WTC11 (cell line): ENCODE measurements at regions of chr2 and their contacts with region 1.

Region 1: GRCh38 chr2:88880441-88880953 is 189.0 kb downstream of the RPIA start:
- DNase-seq: peak; percentile 23
- ATAC-seq: peak; percentile 74
- H3K4me3 Mint-ChIP-seq: no peak overlapping the region
- H3K27ac Mint-ChIP-seq: no peak overlapping the region
- H3K4me1 Mint-ChIP-seq: peaks cover 7% of the 10 kb centered on the region
- H3K27me3 Mint-ChIP-seq: no peaks in the 10 kb centered on the region; the same call in 1 of the 2 replicates
- CTCF ChIP-seq: peak; percentile 61

Region 2: GRCh38 chr2:88729061-88729745 is 151.3 kb before region 1 on chr2:
- CTCF ChIA-PET with region 1: no interaction called
- POLR2A ChIA-PET with region 1: no interaction called
- DNase-seq: no peak
- ATAC-seq: no peak
- H3K4me3 Mint-ChIP-seq: no peak overlapping the region
- H3K27ac Mint-ChIP-seq: no peak overlapping the region
- H3K4me1 Mint-ChIP-seq: no peaks in the 10 kb centered on the region
- H3K27me3 Mint-ChIP-seq: no peaks in the 10 kb centered on the region
- CTCF ChIP-seq: no peak

Region 3: GRCh38 chr2:88831792-88832248 is 48.7 kb before region 1 on chr2:
- CTCF ChIA-PET with region 1: interaction called, 40 read pairs
- POLR2A ChIA-PET with region 1: no interaction called
- DNase-seq: peak; percentile 90
- ATAC-seq: peak; percentile 97
- H3K4me3 Mint-ChIP-seq: no peak overlapping the region
- H3K27ac Mint-ChIP-seq: no peak overlapping the region
- H3K4me1 Mint-ChIP-seq: no peaks in the 10 kb centered on the region
- H3K27me3 Mint-ChIP-seq: no peaks in the 10 kb centered on the region
- CTCF ChIP-seq: peak; percentile 84

Region 4: DNA sequence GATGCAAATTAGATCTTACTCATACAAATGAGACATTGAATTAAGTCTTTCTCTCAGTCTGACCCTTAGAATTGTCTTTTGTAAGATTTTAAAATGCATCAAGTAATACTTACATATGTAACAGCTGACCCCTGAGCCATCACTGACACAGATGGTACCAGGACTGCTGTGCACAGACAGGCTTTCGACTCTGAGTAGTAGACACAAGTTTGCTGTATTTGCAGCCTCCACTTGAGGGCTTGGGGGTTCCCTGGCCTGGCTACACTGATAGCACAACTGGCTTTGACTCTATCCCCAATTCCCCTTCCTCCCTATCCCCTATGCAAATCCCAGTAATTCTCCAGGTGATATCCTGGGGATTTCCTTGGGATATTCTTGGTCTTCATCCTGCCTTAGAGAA is 11.7 kb after region 1 on chr2:
- CTCF ChIA-PET with region 1: interaction called, 20 read pairs
- POLR2A ChIA-PET with region 1: no interaction called
- DNase-seq: no peak
- ATAC-seq: no peak
- H3K4me3 Mint-ChIP-seq: no peak overlapping the region
- H3K27ac Mint-ChIP-seq: no peak overlapping the region
- H3K4me1 Mint-ChIP-seq: no peaks in the 10 kb centered on the region
- H3K27me3 Mint-ChIP-seq: peaks cover 4% of the 10 kb centered on the region; the same call in 1 of the 2 replicates
- CTCF ChIP-seq: no peak

Region 5: GRCh38 chr2:88903749-88904353 is 23.4 kb after region 1 on chr2:
- CTCF ChIA-PET with region 1: interaction called, 25 read pairs
- POLR2A ChIA-PET with region 1: no interaction called
- DNase-seq: no peak
- ATAC-seq: peak; percentile 79
- H3K4me3 Mint-ChIP-seq: no peak overlapping the region
- H3K27ac Mint-ChIP-seq: no peak overlapping the region
- H3K4me1 Mint-ChIP-seq: no peaks in the 10 kb centered on the region
- H3K27me3 Mint-ChIP-seq: no peaks in the 10 kb centered on the region
- CTCF ChIP-seq: peak; percentile 56

Region 6: DNA sequence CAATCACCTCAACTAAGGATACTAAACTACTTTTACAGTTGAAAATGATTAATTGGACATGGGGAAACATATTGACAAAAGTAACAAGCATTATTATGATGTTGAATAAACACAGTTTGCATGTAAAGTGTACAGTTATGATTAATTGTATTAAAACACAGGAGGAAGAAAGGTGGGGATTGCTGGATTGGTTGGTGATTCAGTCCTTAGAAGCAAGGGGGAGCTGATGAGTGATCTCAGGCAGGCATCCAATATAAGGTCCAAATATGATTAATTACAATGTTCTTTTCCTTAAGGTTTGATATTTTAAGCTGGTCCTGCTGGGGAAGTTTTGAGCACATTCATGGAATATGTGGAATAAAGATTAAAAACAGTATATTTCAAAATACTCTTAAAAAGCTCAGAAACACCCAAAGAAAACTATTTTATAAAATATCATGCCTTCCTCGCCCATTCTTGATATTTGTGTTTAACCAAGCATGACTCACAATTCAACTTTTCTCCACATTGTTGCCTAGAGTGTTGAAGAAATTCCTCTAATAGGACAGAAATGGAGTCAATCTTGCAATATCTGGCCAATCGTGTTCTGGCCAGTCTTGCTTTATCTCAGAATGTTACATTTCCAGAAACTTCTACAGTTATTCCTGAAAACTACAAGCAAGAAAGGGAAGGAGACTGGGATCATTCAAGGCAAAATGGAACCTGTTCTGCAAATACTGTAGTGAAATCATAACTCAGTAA is 79.2 kb after region 1 on chr2:
- CTCF ChIA-PET with region 1: interaction called, 16 read pairs
- POLR2A ChIA-PET with region 1: no interaction called
- DNase-seq: no peak
- ATAC-seq: no peak
- H3K4me3 Mint-ChIP-seq: no peak overlapping the region
- H3K27ac Mint-ChIP-seq: no peak overlapping the region
- H3K4me1 Mint-ChIP-seq: no peaks in the 10 kb centered on the region
- H3K27me3 Mint-ChIP-seq: no peaks in the 10 kb centered on the region; the same call in 1 of the 2 replicates
- CTCF ChIP-seq: no peak; the same call in 1 of the 2 replicates